Ovary (tissue), 10 donors: ENCODE measurements at regions of chr19 and their contacts with region 1.

Region 1: GRCh38 chr19:47190167-47190727 is 40.8 kb downstream of the BBC3 start:
- DNase-seq: peak; percentile 49 to 74 (median 63)
- H3K4me3 ChIP-seq: no peak overlapping the region
- H3K27ac ChIP-seq: peak overlapping the region in 1 of 2 donors; percentile 46
- H3K4me1 ChIP-seq: peaks cover 8% of the 10 kb centered on the region
- H3K27me3 ChIP-seq: no peaks in the 10 kb centered on the region
- CTCF ChIP-seq: no peak
- EP300 ChIP-seq: no peak
- POLR2A ChIP-seq: no peak

Region 2: GRCh38 chr19:47157431-47158321 is 32.6 kb before region 1 on chr19:
- intact Hi-C with region 1: loop called in 1 of 4 experiments (anchors 5 kb)
- DNase-seq: peak in 1 of 5 donors; percentile 23
- H3K4me3 ChIP-seq: no peak overlapping the region
- H3K27ac ChIP-seq: peak overlapping the region in 1 of 2 donors; percentile 36
- H3K4me1 ChIP-seq: peaks cover 9% of the 10 kb centered on the region
- H3K27me3 ChIP-seq: no peaks in the 10 kb centered on the region
- CTCF ChIP-seq: no peak
- EP300 ChIP-seq: no peak
- POLR2A ChIP-seq: no peak

Region 3: DNA sequence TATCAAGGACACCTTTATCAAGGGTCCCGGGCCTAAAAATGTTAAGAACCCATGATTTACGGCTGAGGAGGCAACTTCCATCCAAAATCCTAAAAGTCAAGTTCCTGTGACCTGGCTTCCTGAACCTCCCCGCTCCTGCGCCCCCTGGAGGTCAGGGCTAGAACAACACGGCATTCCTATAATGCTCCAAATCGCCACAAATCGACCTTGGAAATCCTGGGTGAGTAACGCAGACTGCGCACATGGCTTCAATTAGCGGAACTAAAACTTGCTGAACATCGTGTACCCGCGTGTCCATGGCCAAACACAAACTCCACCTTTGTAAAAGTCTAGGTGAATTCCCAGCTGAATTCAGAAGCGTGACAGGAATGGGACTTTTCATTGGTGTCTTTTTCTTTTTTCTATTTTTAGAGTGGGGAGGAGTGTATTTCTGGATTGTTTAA is 115.1 kb after region 1 on chr19:
- intact Hi-C with region 1: no loop called
- DNase-seq: peak; percentile 67 to 86 (median 79)
- H3K4me3 ChIP-seq: no peak overlapping the region
- H3K27ac ChIP-seq: no peak overlapping the region
- H3K4me1 ChIP-seq: no peaks in the 10 kb centered on the region
- H3K27me3 ChIP-seq: no peaks in the 10 kb centered on the region
- CTCF ChIP-seq: peak; percentile 29 to 81 (median 70)
- EP300 ChIP-seq: peak; percentile 43
- POLR2A ChIP-seq: no peak